ENCODE measurements at regions of chr1 and their contacts with region 1.

Region 1: DNA sequence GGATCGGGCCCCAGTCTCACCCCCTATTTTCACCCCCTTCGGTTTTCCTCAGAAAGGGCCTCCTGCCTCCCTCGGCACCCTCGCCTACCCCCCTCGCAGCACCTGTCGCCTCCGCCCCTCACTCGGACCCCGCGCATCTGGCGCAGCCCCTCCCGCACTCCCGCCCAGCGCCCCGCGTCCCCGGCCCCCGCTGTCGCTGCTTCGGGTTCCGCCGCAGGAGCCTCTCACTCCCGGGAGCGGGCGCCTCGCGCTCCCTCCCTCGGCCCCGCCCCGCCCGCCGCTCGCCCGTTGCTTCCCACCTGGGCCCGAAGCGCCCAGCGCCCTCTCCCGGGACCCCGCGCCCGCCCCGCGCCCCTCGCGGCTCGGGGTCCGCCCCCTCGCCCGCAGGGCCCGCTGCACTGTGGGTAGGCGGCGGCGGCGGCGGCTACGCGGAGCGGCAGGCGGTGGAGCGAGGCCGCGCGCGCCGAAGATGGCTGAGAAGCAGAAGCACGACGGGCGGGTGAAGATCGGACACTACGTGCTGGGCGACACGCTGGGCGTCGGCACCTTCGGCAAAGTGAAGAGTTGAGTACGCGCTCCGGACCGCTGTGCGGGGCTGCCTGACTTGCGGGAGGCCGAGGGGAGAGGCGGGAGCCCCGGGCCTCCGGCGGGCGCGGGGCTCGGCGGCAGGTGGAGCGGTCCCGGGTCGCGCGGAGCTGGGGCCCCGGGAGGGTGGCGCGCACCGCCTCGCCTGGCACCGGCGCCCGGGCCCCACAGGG is at the start of gene PRKAA2:
- DNase-seq: peak; percentile 73
- ATAC-seq: peak; percentile 89
- total RNA-seq, gene PRKAA2: 77.9 TPM

Region 2: DNA sequence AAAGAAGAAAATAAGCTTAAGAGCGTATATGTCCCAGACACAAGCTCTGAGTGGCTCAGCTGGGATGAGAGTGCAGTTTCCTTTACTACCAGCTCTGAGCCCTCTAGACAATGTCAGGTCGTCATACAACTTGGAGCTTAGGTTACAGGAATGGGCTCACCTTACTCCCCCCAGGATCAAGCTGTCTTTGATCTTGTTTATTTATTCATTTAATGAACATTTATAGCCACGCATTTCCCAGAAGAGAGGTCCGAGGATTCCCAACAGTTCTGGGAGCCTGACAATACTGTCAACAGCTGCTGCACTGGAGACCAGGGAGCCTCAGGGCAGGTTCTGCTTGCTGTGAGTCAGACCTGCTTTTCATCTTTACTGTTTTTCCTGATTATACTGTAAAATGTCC is 444.7 kb before region 1 on chr1:
- intact Hi-C with region 1: no loop called
- DNase-seq: no peak
- ATAC-seq: no peak

Region 3: GRCh38 chr1:56330391-56331026 is 314.6 kb before region 1 on chr1:
- intact Hi-C with region 1: no loop called
- DNase-seq: no peak
- ATAC-seq: no peak

Region 4: DNA sequence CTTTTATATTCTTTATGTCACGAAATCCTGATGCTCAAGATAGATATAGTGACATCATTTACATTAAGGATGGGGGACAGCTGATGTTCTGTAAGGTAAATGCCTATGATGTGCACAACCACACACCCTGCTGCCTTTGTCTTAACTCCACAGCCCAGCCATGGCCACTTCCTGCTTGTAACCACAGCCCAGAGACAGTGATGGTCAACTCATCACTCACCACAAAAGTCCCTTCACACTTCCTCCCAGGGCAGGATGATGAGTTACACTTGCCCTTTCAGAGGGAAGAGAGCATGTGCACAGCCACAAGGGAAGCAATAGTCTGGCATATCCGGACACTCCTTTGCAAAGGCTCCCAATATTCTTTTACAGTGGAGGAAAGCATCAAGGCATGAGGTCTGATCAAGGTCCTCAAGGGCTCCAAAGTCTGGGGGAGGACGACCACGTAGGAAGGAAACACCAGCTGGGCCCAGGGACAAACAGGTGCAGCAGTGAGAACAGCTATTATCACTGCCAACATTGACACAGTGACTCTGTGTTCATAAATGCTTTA is 119.5 kb before region 1 on chr1:
- intact Hi-C with region 1: no loop called
- DNase-seq: peak; percentile 74
- ATAC-seq: peak; percentile 55

Region 5: DNA sequence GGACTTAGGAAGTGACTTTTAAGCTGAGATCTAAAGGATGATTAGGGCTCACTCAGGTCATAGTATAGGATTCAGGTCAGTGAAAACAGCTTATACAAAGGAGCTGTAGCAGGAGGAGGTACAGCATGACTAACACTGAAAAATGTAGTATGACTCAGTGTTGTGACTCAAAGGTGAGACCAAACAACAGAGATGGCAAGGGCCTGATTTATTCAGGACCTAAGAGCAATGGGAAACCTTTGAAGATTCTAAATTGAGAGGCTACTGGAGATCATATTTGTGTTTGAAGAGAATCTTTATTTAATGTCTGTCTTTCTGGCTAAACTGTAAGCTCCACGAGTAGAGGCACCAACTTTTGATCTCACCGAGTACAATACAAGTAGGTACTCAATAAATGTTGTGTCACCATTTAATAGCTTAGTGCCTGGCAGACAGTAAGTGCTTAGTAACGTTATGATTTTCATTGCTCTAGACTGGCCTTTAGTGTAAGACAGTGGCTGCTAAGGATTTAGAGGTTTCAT is 43.5 kb after region 1 on chr1:
- intact Hi-C with region 1: loop called (anchors 5 kb)
- DNase-seq: no peak
- ATAC-seq: no peak

Region 6: GRCh38 chr1:56709269-56709880 is 64.3 kb after region 1 on chr1:
- intact Hi-C with region 1: loop called (anchors 5 kb)
- DNase-seq: no peak
- ATAC-seq: no peak

Measured in Right ventricle myocardium inferior (tissue), 1 donor.